Naive thymus-derived CD4-positive, alpha-beta T cell (primary cell): ENCODE measurements at regions of chr6 and their contacts with region 1.

Region 1: DNA sequence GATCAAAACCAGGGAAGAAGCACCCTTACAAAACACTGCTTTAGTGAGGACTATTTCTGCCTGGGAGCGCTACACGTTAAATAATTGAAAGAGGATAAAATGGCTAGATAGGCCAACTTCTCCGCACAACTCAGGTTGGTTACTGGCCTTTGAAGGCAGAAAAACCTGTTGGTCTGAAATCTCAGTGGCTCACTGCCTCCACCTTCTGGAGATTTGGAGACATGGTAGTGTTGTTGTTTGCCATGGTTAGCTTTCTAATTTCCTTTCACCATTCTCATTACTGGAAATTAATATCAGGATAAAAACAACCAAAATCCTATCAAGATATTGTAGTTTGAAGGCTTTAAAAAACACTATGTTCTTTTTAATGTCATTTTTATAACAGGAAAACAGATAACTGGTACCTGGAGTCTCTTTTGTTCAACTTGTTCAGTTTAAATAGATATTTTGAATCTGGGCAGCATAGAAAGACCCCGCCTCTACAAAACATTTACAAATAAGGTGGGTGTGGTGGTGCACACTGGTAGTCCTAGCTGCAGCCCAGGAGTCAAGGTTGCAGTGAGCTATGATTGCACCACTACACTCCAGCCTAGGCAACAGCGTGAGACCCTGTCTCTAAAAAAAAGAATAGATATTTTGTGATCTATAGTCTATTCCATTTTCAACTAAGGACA is 27.5 kb upstream of the BCLAF1 start:
- DNase-seq: peak; percentile 25 to 77 (median 66)
- ATAC-seq: peak; percentile 91
- H3K4me3 ChIP-seq: no peak overlapping the region
- H3K4me3 Mint-ChIP-seq: no peak overlapping the region
- H3K27ac ChIP-seq: no peak overlapping the region
- H3K27ac Mint-ChIP-seq: peak overlapping the region in 1 of 9 donors; percentile 19
- H3K4me1 ChIP-seq: no peaks in the 10 kb centered on the region
- H3K4me1 Mint-ChIP-seq: peaks cover 0 to 5% (median 0%) of the 10 kb centered on the region in 7 donors
- H3K27me3 ChIP-seq: no peaks in the 10 kb centered on the region
- H3K27me3 Mint-ChIP-seq: peaks cover 0 to 19% (median 0%) of the 10 kb centered on the region in 5 donors

Region 2: DNA sequence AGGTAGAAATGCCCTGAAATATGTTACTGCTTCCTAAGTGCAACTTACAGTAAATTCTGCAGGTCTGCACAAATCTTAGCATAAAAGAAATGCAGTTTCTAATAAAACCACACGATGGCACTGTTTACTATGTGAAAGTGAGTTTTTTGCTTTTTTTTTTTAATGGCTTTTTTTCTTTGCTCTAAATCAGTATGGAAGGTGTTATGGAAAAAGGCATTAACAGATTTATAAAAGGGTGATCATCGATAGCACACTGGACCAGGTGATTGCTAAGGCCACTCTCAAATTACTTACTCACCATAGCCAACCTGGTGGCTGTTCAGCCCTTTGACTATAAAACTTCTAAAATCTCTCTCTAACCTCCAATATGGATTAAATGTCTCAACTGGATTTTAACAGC is 865.5 kb before region 1 on chr6:
- CTCF ChIA-PET with region 1: interaction called, 3 read pairs
- POLR2A ChIA-PET with region 1: no interaction called
- intact Hi-C with region 1: loop called (anchors 1 kb)
- DNase-seq: peak in 6 of 9 donors; percentile 13 to 54 (median 44)
- ATAC-seq: peak; percentile 63
- H3K4me3 ChIP-seq: no peak overlapping the region
- H3K4me3 Mint-ChIP-seq: no peak overlapping the region
- H3K27ac ChIP-seq: no peak overlapping the region
- H3K27ac Mint-ChIP-seq: no peak overlapping the region
- H3K4me1 ChIP-seq: no peaks in the 10 kb centered on the region
- H3K4me1 Mint-ChIP-seq: peaks cover 0 to 4% (median 0%) of the 10 kb centered on the region in 7 donors
- H3K27me3 ChIP-seq: no peaks in the 10 kb centered on the region
- H3K27me3 Mint-ChIP-seq: no peaks in the 10 kb centered on the region

Region 3: DNA sequence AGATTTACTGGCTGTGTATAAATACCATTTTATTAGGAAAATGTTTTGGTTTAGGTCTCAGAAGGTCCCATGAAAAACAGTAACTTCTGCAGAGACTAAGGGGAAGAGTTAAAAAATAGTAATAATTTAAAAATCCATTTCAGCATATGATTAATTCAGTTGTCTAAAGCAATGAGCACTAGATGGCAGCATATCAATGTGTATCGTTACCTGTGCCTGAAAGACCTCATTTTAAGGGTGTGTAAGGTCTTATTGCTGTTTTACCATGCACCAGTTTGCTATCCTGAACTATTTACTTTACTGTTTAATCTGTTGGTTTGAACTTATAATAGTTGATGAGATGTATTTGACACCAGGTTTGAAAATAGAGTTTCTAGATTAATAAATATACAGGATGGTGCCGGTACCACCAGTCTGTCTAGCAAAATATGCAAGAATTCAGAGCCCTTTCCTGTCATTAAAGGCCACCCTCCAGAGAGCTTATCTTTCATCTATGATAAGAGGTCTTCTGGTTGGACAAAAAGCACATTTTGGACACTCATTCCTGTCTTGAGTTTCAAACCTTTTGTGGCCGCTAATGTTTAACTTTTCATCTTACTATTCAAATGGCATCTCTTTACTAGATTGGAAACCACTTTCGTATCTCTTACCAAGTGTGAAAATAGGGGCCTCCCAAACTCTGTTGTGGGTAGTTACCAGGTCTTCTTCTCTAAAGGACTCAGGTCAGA is 810.7 kb before region 1 on chr6:
- CTCF ChIA-PET with region 1: no interaction called
- POLR2A ChIA-PET with region 1: no interaction called
- intact Hi-C with region 1: loop called (anchors 1 kb)
- DNase-seq: peak in 7 of 9 donors; percentile 7 to 53 (median 33)
- ATAC-seq: peak; percentile 90
- H3K4me3 ChIP-seq: no peak overlapping the region
- H3K4me3 Mint-ChIP-seq: no peak overlapping the region
- H3K27ac ChIP-seq: no peak overlapping the region
- H3K27ac Mint-ChIP-seq: peak overlapping the region in 1 of 9 donors; percentile 33
- H3K4me1 ChIP-seq: peaks cover 0 to 6% of the 10 kb centered on the region in 2 donors
- H3K4me1 Mint-ChIP-seq: peaks cover 0 to 14% (median 0%) of the 10 kb centered on the region in 7 donors
- H3K27me3 ChIP-seq: no peaks in the 10 kb centered on the region
- H3K27me3 Mint-ChIP-seq: peaks cover 0 to 2% (median 0%) of the 10 kb centered on the region in 5 donors

Region 4: DNA sequence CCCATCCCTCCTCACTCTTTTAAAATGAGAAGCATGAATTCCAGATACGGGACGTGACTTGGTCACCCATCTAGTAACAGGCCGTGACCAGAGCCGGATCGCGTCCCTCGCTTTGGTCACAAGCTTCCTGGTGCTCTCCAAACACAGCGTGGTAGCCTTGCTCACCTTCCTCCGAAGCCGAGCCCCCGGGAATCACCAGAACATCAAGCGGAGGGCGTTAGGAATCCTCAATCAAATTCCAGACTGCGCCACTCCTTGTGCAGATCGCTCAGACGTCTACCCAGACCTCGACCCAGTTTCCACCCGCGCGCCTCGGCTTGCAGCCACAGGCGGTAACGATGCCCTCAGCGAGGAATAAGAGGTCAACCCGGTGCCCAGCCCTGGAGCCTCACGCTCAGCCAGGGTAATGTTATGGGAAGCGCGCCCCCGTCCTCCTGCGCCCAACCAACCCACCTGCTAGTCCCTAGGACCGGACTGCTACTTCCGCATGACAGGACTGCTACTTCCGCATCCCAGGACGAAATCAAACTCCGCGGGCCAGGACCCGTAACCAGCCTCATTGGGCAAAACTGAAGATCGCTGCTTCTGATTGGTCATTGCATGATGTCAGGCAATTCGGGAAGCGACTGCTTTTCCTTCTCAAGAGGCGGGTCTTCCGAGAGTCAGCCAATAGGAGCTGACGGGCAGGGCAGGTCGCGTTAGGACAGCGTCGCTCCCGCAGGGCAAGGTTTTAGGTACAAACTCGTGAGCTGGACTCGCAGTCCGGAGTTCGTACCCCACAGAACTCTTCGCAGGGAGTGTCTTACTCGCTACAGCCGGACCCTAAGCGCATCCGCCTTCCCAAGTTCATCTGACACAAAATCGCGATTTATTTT is 67.1 kb before region 1 on chr6 and contains the start of gene MTFR2:
- CTCF ChIA-PET with region 1: interaction called, 6 read pairs
- POLR2A ChIA-PET with region 1: no interaction called
- intact Hi-C with region 1: loop called (anchors 1 kb)
- DNase-seq: peak; percentile 74 to 97 (median 93)
- ATAC-seq: peak; percentile 95
- H3K4me3 ChIP-seq: peak within 1 kb of the TSS; percentile 81
- H3K4me3 Mint-ChIP-seq: peak within 1 kb of the TSS; percentile 91 to 99 (median 94)
- H3K27ac ChIP-seq: peak within 1 kb of the TSS; percentile 59
- H3K27ac Mint-ChIP-seq: peak within 1 kb of the TSS; percentile 47 to 89 (median 80)
- H3K4me1 ChIP-seq: peaks cover 7 to 15% of the 10 kb centered on the region in 2 donors
- H3K4me1 Mint-ChIP-seq: peaks cover 6 to 62% (median 43%) of the 10 kb centered on the region in 7 donors
- H3K27me3 ChIP-seq: no peaks in the 10 kb centered on the region
- H3K27me3 Mint-ChIP-seq: no peaks in the 10 kb centered on the region
- total RNA-seq, gene MTFR2: 0.92 to 20.4 (median 1.9) TPM

Region 5: DNA sequence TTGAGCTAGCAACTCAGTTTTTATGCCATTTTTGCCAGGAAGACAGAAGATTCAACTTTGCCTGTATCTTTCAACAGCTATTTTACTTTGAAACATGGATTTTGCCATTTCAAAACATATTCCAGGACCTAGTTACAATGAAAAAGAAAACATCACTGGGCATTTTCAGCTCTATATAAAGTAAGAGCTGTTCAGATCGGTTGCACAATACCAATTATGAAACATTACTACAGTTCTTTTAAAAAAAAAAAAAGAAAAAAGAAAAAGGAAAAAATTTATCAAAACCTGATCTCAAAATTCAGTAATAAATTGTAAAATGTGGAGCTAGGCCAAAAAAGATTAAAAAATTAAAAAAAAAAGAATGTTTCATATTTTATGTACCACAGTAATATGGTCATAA is 43.1 kb before region 1 on chr6:
- CTCF ChIA-PET with region 1: interaction called, 3 read pairs
- POLR2A ChIA-PET with region 1: no interaction called
- intact Hi-C with region 1: loop called in 1 of 2 experiments (anchors 2 kb)
- DNase-seq: no peak
- ATAC-seq: no peak
- H3K4me3 ChIP-seq: no peak overlapping the region
- H3K4me3 Mint-ChIP-seq: no peak overlapping the region
- H3K27ac ChIP-seq: no peak overlapping the region
- H3K27ac Mint-ChIP-seq: peak overlapping the region in 1 of 9 donors; percentile 53
- H3K4me1 ChIP-seq: peaks cover 0 to 11% of the 10 kb centered on the region in 2 donors
- H3K4me1 Mint-ChIP-seq: peaks cover 18 to 68% (median 58%) of the 10 kb centered on the region in 7 donors
- H3K27me3 ChIP-seq: no peaks in the 10 kb centered on the region
- H3K27me3 Mint-ChIP-seq: no peaks in the 10 kb centered on the region